ENCODE measurements at regions of chr14 and their contacts with region 1.

Region 1: GRCh38 chr14:90256354-90257131 is at the start of gene PSMC1:
- DNase-seq: peak; percentile 88

Region 2: DNA sequence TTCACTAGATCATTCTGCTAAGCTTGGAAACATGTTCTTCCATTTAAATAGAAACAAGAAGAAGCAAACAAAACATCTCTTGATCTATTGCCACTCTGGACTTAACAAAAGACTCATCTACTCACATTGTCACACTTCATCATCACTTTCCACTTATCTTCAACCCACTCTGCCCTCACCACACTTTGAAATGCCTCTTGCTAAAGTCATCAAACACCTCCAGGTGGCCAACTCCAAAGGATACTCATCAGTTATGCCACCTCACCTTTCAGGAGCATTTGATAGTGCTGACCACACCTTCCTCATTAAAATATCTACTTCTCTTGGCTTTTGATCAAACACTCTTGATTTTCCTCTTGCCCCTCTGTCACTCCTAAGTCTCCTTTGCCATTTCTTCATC is 309.2 kb before region 1 on chr14:
- CTCF ChIA-PET with region 1: no interaction called
- POLR2A ChIA-PET with region 1: no interaction called
- DNase-seq: no peak

Region 3: GRCh38 chr14:90242444-90242843 is 14.1 kb before region 1 on chr14:
- CTCF ChIA-PET with region 1: no interaction called
- POLR2A ChIA-PET with region 1: no interaction called
- DNase-seq: no peak

Region 4: GRCh38 chr14:90266441-90267154 is 10.1 kb after region 1 on chr14:
- CTCF ChIA-PET with region 1: no interaction called
- POLR2A ChIA-PET with region 1: interaction called, 12 read pairs
- DNase-seq: no peak